Activated CD4-positive, alpha-beta T cell treated with anti-CD3 and anti-CD28 coated beads for 36 hours (primary cell): ENCODE measurements at regions of chr5 and their contacts with region 1.

Region 1: GRCh38 chr5:149551200-149552037 is at the start of gene CSNK1A1:
- DNase-seq: peak; percentile 100
- ATAC-seq: peak; percentile 90
- H3K4me3 Mint-ChIP-seq: peak within 1 kb of the TSS; percentile 95
- H3K27ac Mint-ChIP-seq: peak within 1 kb of the TSS; percentile 100
- H3K4me1 Mint-ChIP-seq: peaks cover 27% of the 10 kb centered on the region
- H3K27me3 Mint-ChIP-seq: no peaks in the 10 kb centered on the region
- total RNA-seq, gene CSNK1A1: 169 to 203 TPM

Region 2: GRCh38 chr5:149345147-149345875 is 206.1 kb before region 1 on chr5 and contains the start of gene GRPEL2:
- CTCF ChIA-PET with region 1: interaction called, 12 read pairs
- POLR2A ChIA-PET with region 1: interaction called, 7 read pairs
- intact Hi-C with region 1: loop called (anchors 1 kb)
- DNase-seq: peak; percentile 97
- ATAC-seq: peak; percentile 89
- H3K4me3 Mint-ChIP-seq: peak within 1 kb of the TSS; percentile 96
- H3K27ac Mint-ChIP-seq: peak within 1 kb of the TSS; percentile 99
- H3K4me1 Mint-ChIP-seq: peaks cover 49% of the 10 kb centered on the region
- H3K27me3 Mint-ChIP-seq: no peaks in the 10 kb centered on the region
- total RNA-seq, gene GRPEL2: 27.1 to 37.2 TPM

Region 3: GRCh38 chr5:149514512-149514911 is 36.9 kb before region 1 on chr5:
- CTCF ChIA-PET with region 1: interaction called, 11 read pairs
- POLR2A ChIA-PET with region 1: interaction called, 4 read pairs
- intact Hi-C with region 1: loop called (anchors 5 kb)
- DNase-seq: no peak
- ATAC-seq: no peak
- H3K4me3 Mint-ChIP-seq: no peak overlapping the region
- H3K27ac Mint-ChIP-seq: peak overlapping the region; percentile 26
- H3K4me1 Mint-ChIP-seq: peaks cover 42% of the 10 kb centered on the region
- H3K27me3 Mint-ChIP-seq: no peaks in the 10 kb centered on the region

Region 4: GRCh38 chr5:149576021-149576420 is 24.6 kb after region 1 on chr5:
- CTCF ChIA-PET with region 1: interaction called, 5 read pairs
- POLR2A ChIA-PET with region 1: interaction called, 3 read pairs
- intact Hi-C with region 1: loop called in 1 of 2 experiments (anchors 1 kb)
- DNase-seq: peak; percentile 39
- ATAC-seq: peak; percentile 92
- H3K4me3 Mint-ChIP-seq: no peak overlapping the region
- H3K27ac Mint-ChIP-seq: peak overlapping the region; percentile 90
- H3K4me1 Mint-ChIP-seq: peaks cover 33% of the 10 kb centered on the region
- H3K27me3 Mint-ChIP-seq: peaks cover 2% of the 10 kb centered on the region

Region 5: DNA sequence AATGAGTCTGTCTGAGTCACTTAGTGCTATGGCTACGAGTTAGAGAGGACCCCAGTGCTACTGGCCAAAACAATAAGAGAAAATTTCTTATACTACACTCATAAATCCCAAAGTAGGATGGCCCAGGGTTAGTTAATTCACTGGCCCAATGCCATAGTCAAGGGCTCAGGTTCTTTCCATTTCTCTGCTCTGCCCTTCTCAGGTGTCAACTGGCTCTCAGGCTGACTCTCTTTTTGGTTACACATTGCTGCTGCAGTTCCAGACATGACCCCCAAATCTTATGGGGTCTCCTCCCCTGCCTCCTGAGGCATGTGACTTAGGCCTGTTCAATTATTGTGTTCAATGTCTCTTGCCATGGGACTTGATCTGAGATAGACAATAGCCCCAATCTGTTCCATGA is 100.3 kb after region 1 on chr5:
- CTCF ChIA-PET with region 1: no interaction called
- POLR2A ChIA-PET with region 1: no interaction called
- intact Hi-C with region 1: no loop called
- DNase-seq: peak; percentile 39
- ATAC-seq: peak; percentile 43
- H3K4me3 Mint-ChIP-seq: no peak overlapping the region
- H3K27ac Mint-ChIP-seq: no peak overlapping the region
- H3K4me1 Mint-ChIP-seq: peaks cover 2% of the 10 kb centered on the region
- H3K27me3 Mint-ChIP-seq: no peaks in the 10 kb centered on the region

Region 6: DNA sequence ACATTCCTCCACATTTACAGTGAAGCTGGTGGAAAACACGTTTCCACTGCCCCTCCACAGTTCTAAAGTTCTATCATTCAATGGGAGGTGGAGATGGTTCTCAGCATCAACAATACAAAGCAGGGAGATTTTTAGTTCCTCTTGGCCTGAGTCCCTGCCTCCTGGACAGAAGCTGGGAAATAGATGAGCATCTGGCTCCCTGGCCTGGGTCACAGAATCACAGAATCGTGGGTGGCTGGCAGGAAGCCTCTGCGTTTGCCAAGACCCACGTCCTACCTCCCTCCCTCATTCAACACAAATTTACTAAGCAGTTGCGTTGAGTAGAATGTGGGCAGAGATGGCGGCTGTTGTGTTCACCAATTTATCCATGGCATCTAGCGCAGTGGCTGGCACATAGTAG is 173.5 kb after region 1 on chr5:
- CTCF ChIA-PET with region 1: no interaction called
- POLR2A ChIA-PET with region 1: no interaction called
- intact Hi-C with region 1: no loop called
- DNase-seq: no peak
- ATAC-seq: no peak
- H3K4me3 Mint-ChIP-seq: no peak overlapping the region
- H3K27ac Mint-ChIP-seq: peak overlapping the region; percentile 51
- H3K4me1 Mint-ChIP-seq: peaks cover 9% of the 10 kb centered on the region
- H3K27me3 Mint-ChIP-seq: peaks cover 8% of the 10 kb centered on the region

Region 7: DNA sequence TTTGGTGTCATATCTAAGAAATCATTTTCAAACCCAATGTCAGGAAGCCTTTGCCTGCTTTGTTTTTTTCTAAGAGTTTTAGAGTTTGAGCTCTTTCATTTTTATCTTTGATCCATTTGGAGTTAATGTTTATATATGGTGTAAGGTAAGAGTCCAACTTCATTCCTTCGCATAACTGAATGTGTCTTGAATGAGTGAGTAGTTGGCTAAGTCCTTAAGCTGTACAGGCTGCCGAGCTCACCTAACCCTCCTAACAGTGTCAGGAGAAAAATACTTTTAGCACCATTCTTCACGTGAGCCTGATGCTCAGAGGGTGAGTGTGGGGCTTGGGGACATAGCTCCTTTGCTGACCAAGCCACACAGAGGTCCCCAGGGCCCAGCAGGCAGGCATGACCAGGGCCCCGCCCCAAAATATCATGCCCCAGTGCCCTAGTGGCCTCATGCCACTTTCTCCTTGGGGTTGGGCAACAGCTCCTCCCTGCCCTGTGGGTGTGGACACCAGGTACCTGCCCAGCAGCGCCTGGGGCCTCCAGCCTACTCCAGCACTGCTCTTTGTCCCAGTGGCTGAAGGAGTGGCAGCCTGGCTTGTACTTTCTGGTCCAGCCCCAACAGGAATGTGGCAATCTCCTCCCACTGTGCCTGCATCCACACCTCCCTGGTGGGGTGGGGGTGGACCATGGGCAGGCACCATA is 195.9 kb after region 1 on chr5:
- CTCF ChIA-PET with region 1: no interaction called
- POLR2A ChIA-PET with region 1: no interaction called
- intact Hi-C with region 1: no loop called
- DNase-seq: no peak
- ATAC-seq: no peak
- H3K4me3 Mint-ChIP-seq: no peak overlapping the region
- H3K27ac Mint-ChIP-seq: no peak overlapping the region
- H3K4me1 Mint-ChIP-seq: peaks cover 17% of the 10 kb centered on the region
- H3K27me3 Mint-ChIP-seq: no peaks in the 10 kb centered on the region

Region 8: DNA sequence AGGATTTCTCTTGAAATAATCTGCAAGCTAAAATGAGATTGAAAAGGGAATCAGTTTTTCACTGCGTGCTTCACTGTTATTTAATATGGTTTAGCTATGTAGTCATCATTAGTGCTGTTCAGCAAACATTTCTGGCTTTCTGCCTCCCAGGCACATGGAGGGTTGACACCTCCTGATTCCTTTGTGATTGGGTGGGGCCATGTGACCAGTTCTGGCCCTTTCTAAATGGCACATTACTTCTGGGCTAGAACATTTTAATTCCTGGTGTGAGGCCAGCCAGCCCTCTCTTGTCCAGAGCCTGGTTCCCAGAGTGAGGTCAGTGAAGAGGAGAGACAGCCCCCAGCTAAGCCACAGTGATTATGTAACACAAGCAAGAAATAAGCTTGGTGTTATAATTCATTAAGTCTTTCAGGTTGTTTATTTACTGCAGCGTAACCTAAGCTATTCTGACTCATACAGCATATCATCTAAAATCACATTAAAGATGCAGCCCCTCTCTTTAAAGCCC is 768.7 kb after region 1 on chr5:
- CTCF ChIA-PET with region 1: no interaction called
- POLR2A ChIA-PET with region 1: no interaction called
- intact Hi-C with region 1: no loop called
- DNase-seq: no peak
- ATAC-seq: no peak
- H3K4me3 Mint-ChIP-seq: no peak overlapping the region
- H3K27ac Mint-ChIP-seq: no peak overlapping the region
- H3K4me1 Mint-ChIP-seq: peaks cover 6% of the 10 kb centered on the region
- H3K27me3 Mint-ChIP-seq: peaks cover 3% of the 10 kb centered on the region

Region 9: GRCh38 chr5:150449517-150450339 is 898.3 kb after region 1 on chr5 and contains the start of gene RPS14:
- CTCF ChIA-PET with region 1: no interaction called
- POLR2A ChIA-PET with region 1: no interaction called
- intact Hi-C with region 1: loop called in 1 of 2 experiments (anchors 2 kb)
- DNase-seq: peak; percentile 96
- ATAC-seq: peak; percentile 93
- H3K4me3 Mint-ChIP-seq: peak within 1 kb of the TSS; percentile 95
- H3K27ac Mint-ChIP-seq: peak within 1 kb of the TSS; percentile 99
- H3K4me1 Mint-ChIP-seq: peaks cover 31% of the 10 kb centered on the region
- H3K27me3 Mint-ChIP-seq: no peaks in the 10 kb centered on the region
- total RNA-seq, gene RPS14: 2,270 to 3,312 TPM